ENCODE measurements at regions of chr3 and their contacts with region 1.

Region 1: DNA sequence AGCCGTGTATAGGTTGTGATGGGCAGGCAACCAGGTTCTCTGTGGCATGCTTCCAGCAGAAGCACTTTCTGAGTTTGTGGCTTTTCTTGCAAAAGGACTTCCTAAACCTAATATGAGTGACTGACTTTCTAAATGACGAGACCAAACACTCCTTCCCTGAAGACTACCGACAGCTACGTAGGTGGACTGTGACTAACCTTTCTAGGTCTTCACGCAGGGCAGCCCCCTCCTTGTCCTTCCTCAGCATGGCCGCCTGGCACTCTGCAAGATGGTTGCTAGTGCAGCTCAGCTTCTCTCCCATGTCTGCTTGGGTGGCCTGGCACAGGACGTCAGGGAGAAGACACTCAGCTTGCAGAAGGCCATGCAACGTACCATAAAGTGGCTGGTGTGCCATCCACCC is 20.9 kb downstream of the CXCR6 start:
- DNase-seq: peak in 3 of 9 experiments; percentile 41 to 57 (median 53)
- ATAC-seq: peak; percentile 70
- H3K4me3 ChIP-seq: no peak overlapping the region
- H3K4me3 Mint-ChIP-seq: no peak overlapping the region
- H3K27ac ChIP-seq: peak overlapping the region in 1 of 2 experiments; percentile 66
- H3K27ac Mint-ChIP-seq: peak overlapping the region; percentile 91
- H3K4me1 ChIP-seq: peaks cover 33% of the 10 kb centered on the region
- H3K4me1 Mint-ChIP-seq: peaks cover 66% of the 10 kb centered on the region
- H3K27me3 ChIP-seq: no peaks in the 10 kb centered on the region
- H3K27me3 Mint-ChIP-seq: no peaks in the 10 kb centered on the region
- CTCF ChIP-seq: no peak

Region 2: GRCh38 chr3:45948311-45948781 is 15.8 kb before region 1 on chr3:
- CTCF ChIA-PET with region 1: interaction called, 13 read pairs
- POLR2A ChIA-PET with region 1: interaction called, 29 read pairs
- intact Hi-C with region 1: loop called in 1 of 2 experiments (anchors 2 kb)
- DNase-seq: no peak
- ATAC-seq: no peak
- H3K4me3 ChIP-seq: no peak overlapping the region
- H3K4me3 Mint-ChIP-seq: no peak overlapping the region
- H3K27ac ChIP-seq: peak overlapping the region in 1 of 2 experiments; percentile 73
- H3K27ac Mint-ChIP-seq: peak overlapping the region; percentile 85
- H3K4me1 ChIP-seq: peaks cover 54% of the 10 kb centered on the region
- H3K4me1 Mint-ChIP-seq: peaks cover 90% of the 10 kb centered on the region
- H3K27me3 ChIP-seq: no peaks in the 10 kb centered on the region
- H3K27me3 Mint-ChIP-seq: no peaks in the 10 kb centered on the region
- CTCF ChIP-seq: no peak

Region 3: GRCh38 chr3:45978006-45978761 is 14.0 kb after region 1 on chr3:
- CTCF ChIA-PET with region 1: interaction called, 19 read pairs
- POLR2A ChIA-PET with region 1: interaction called, 10 read pairs
- intact Hi-C with region 1: no loop called
- DNase-seq: peak in 7 of 9 experiments; percentile 29 to 66 (median 57)
- ATAC-seq: no peak
- H3K4me3 ChIP-seq: no peak overlapping the region
- H3K4me3 Mint-ChIP-seq: peak overlapping the region; percentile 47
- H3K27ac ChIP-seq: peak overlapping the region in 1 of 2 experiments; percentile 60
- H3K27ac Mint-ChIP-seq: peak overlapping the region; percentile 93
- H3K4me1 ChIP-seq: peaks cover 46% of the 10 kb centered on the region
- H3K4me1 Mint-ChIP-seq: peaks cover 76% of the 10 kb centered on the region
- H3K27me3 ChIP-seq: no peaks in the 10 kb centered on the region
- H3K27me3 Mint-ChIP-seq: no peaks in the 10 kb centered on the region
- CTCF ChIP-seq: no peak